AG04449 (cell line): ENCODE measurements at regions of chr6 and their contacts with region 1.

Region 1: GRCh38 chr6:3209114-3210023 is 18.1 kb downstream of the TUBB2B start:
- DNase-seq: peak; percentile 88
- H3K4me3 ChIP-seq: peak overlapping the region; percentile 23
- CTCF ChIP-seq: peak; percentile 30

Region 2: GRCh38 chr6:3162565-3163247 is 46.7 kb before region 1 on chr6:
- CTCF ChIA-PET with region 1: interaction called, 6 read pairs
- POLR2A ChIA-PET with region 1: interaction called, 18 read pairs
- DNase-seq: no peak
- H3K4me3 ChIP-seq: peak overlapping the region; percentile 67
- CTCF ChIP-seq: peak; percentile 32